IMR-90 (cell line): ENCODE measurements at regions of chr13 and their contacts with region 1.

Region 1: GRCh38 chr13:37640499-37640898 is 41.9 kb upstream of the POSTN start:
- DNase-seq: peak; percentile 86
- ATAC-seq: peak; percentile 91
- H3K4me3 ChIP-seq: no peak overlapping the region
- H3K27ac ChIP-seq: no peak overlapping the region
- H3K4me1 ChIP-seq: peaks cover 4% of the 10 kb centered on the region
- H3K27me3 ChIP-seq: no peaks in the 10 kb centered on the region
- CTCF ChIP-seq: peak; percentile 87
- POLR2A ChIP-seq: 0 out of 2 replicates have a peak, but pooled peaks have one; percentile 38
- RAD21 ChIP-seq: peak; percentile 94

Region 2: DNA sequence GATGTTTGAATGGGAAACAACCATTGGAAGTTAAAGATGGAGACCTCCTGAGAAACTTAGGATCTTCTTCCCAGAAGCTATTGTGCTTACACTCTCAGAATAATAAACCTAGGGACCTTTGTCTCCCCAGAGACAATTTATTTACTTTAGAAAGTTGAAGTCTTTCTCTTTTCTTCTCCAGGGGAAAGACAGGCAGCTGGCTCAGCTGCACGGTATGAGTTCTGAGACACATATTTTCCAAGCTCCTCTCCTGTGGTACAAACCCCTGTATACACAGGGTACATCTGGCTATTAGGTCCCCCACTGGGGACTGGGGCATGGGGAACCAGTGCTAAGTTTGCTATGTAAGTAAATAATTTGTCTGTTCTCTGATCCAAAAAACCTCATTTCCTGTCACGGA is 25.5 kb after region 1 on chr13:
- CTCF ChIA-PET with region 1: no interaction called
- POLR2A ChIA-PET with region 1: no interaction called
- dilution Hi-C with region 1: no loop called
- in situ Hi-C with region 1: no loop called
- intact Hi-C with region 1: no loop called
- DNase-seq: peak; percentile 23
- ATAC-seq: peak; percentile 27; the same call in 1 of the 2 replicates
- H3K4me3 ChIP-seq: no peak overlapping the region
- H3K27ac ChIP-seq: no peak overlapping the region
- H3K4me1 ChIP-seq: peaks cover 7% of the 10 kb centered on the region; the same call in 1 of the 2 replicates
- H3K27me3 ChIP-seq: no peaks in the 10 kb centered on the region
- CTCF ChIP-seq: no peak
- POLR2A ChIP-seq: no peak
- RAD21 ChIP-seq: no peak

Region 3: DNA sequence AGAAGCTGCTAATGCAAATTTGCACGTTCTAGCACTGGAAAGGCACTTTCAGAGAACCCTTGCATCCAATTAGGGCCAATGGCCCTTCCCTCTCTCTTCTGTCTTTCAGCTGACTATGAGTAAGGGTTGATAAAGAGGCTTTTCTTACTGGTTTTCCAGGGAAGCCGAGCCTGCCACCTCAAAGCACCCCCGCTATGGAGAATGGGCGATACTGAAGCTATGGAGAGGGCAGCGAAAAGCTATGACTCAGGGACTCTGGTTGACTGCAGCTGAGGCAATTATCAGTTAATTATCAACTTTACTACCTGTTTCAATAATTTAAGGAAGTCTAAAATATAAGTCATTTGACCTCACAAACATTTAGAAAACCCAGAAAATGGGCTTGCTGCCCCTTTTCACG is 113.3 kb after region 1 on chr13:
- CTCF ChIA-PET with region 1: no interaction called
- POLR2A ChIA-PET with region 1: no interaction called
- dilution Hi-C with region 1: no loop called
- in situ Hi-C with region 1: no loop called
- intact Hi-C with region 1: loop called (anchors 2 kb)
- DNase-seq: no peak
- ATAC-seq: no peak
- H3K4me3 ChIP-seq: no peak overlapping the region
- H3K27ac ChIP-seq: no peak overlapping the region
- H3K4me1 ChIP-seq: peaks cover 2% of the 10 kb centered on the region; the same call in 1 of the 2 replicates
- H3K27me3 ChIP-seq: no peaks in the 10 kb centered on the region
- CTCF ChIP-seq: no peak
- POLR2A ChIP-seq: no peak
- RAD21 ChIP-seq: no peak

Region 4: GRCh38 chr13:37944869-37945442 is 304.5 kb after region 1 on chr13:
- CTCF ChIA-PET with region 1: no interaction called
- POLR2A ChIA-PET with region 1: no interaction called
- dilution Hi-C with region 1: no loop called
- in situ Hi-C with region 1: no loop called
- intact Hi-C with region 1: loop called (anchors 2 kb)
- DNase-seq: peak; percentile 3
- ATAC-seq: no peak
- H3K4me3 ChIP-seq: no peak overlapping the region
- H3K27ac ChIP-seq: no peak overlapping the region
- H3K4me1 ChIP-seq: no peaks in the 10 kb centered on the region
- H3K27me3 ChIP-seq: no peaks in the 10 kb centered on the region; the same call in 1 of the 2 replicates
- CTCF ChIP-seq: no peak
- POLR2A ChIP-seq: no peak
- RAD21 ChIP-seq: peak; percentile 22

Region 5: DNA sequence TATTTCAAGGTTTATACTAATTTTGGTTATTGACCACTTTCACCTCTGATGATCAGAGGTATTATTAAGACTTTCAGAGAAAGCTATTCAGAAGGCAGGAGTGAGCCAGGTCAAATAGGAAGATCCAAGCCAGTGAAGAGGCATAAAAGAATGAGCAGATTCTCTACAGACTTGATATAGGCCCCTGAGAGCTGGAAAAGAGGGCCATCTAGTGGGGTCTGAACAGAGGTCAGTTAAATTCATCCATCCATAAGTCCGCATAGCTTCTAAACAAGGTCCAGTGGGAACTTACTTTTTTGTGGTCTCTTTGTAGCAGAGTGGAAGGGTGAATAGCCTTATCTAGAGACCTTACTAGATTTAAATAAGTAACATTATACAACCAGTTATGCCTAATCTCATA is 582.6 kb after region 1 on chr13:
- CTCF ChIA-PET with region 1: interaction called, 3 read pairs
- POLR2A ChIA-PET with region 1: no interaction called
- dilution Hi-C with region 1: no loop called
- in situ Hi-C with region 1: loop called (anchors 25 kb)
- intact Hi-C with region 1: loop called (anchors 10 kb)
- DNase-seq: peak; percentile 1
- ATAC-seq: no peak
- H3K4me3 ChIP-seq: no peak overlapping the region
- H3K27ac ChIP-seq: no peak overlapping the region
- H3K4me1 ChIP-seq: no peaks in the 10 kb centered on the region
- H3K27me3 ChIP-seq: no peaks in the 10 kb centered on the region
- CTCF ChIP-seq: no peak
- POLR2A ChIP-seq: no peak
- RAD21 ChIP-seq: peak; percentile 34; the same call in 1 of the 2 replicates

Region 6: GRCh38 chr13:38530492-38530891 is 890.0 kb after region 1 on chr13:
- CTCF ChIA-PET with region 1: no interaction called
- POLR2A ChIA-PET with region 1: no interaction called
- dilution Hi-C with region 1: no loop called
- in situ Hi-C with region 1: no loop called
- intact Hi-C with region 1: loop called (anchors 2 kb)
- DNase-seq: peak; percentile 1
- ATAC-seq: no peak
- H3K4me3 ChIP-seq: no peak overlapping the region
- H3K27ac ChIP-seq: no peak overlapping the region
- H3K4me1 ChIP-seq: no peaks in the 10 kb centered on the region
- H3K27me3 ChIP-seq: no peaks in the 10 kb centered on the region
- CTCF ChIP-seq: peak; percentile 32
- POLR2A ChIP-seq: no peak
- RAD21 ChIP-seq: peak; percentile 31

Region 7: DNA sequence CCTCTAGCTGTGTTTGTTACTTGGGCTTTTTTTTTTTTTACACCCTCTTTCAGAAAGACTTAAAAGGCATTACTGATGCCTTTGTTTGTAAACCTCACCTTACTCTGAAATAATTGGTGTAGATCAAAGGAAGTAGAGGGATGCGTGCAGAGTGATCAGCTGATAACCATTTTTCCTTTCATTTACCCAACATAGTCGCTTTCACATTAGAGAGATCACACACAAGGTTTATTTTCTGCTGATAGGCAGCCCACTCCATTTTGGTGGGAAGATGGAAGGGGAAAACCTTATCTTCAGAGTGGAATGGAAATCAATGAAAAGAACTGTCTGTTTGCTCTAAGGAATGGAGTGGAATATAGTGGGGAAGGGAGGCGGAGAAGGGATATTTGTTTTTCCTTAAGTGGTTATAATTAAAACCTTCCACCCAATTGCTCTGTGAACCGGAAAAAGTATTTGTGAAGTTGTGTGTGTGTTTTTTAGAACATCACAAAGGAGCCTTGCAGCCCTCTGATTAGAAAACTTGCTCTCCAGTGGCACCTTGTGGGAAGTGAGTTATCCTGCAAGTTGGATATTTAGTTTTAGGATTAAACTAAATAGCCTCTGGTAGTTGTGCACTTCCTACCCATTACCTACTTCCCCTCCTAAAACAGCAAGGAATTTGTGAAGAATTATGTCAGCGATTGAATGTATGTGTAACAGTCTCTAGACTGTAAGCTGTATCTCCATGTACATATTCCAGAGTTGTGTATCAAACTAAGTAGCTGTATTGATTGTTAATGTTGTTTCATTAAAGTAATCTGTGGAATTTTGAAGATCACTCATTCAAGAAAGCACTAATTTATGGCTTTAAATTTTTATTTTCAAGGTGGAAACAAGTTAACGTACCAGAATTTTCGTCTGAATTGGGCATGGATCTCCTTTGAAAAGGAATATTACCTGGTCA is 1123.2 kb after region 1 on chr13:
- CTCF ChIA-PET with region 1: no interaction called
- POLR2A ChIA-PET with region 1: no interaction called
- dilution Hi-C with region 1: no loop called
- in situ Hi-C with region 1: loop called (anchors 25 kb)
- intact Hi-C with region 1: loop called (anchors 5 kb)
- DNase-seq: peak; percentile 33
- ATAC-seq: peak; percentile 84
- H3K4me3 ChIP-seq: no peak overlapping the region
- H3K27ac ChIP-seq: no peak overlapping the region
- H3K4me1 ChIP-seq: no peaks in the 10 kb centered on the region
- H3K27me3 ChIP-seq: no peaks in the 10 kb centered on the region
- CTCF ChIP-seq: peak; percentile 52
- POLR2A ChIP-seq: no peak
- RAD21 ChIP-seq: peak; percentile 47